PC-9 (cell line): ENCODE measurements at regions of chr12 and their contacts with region 1.

Region 1: DNA sequence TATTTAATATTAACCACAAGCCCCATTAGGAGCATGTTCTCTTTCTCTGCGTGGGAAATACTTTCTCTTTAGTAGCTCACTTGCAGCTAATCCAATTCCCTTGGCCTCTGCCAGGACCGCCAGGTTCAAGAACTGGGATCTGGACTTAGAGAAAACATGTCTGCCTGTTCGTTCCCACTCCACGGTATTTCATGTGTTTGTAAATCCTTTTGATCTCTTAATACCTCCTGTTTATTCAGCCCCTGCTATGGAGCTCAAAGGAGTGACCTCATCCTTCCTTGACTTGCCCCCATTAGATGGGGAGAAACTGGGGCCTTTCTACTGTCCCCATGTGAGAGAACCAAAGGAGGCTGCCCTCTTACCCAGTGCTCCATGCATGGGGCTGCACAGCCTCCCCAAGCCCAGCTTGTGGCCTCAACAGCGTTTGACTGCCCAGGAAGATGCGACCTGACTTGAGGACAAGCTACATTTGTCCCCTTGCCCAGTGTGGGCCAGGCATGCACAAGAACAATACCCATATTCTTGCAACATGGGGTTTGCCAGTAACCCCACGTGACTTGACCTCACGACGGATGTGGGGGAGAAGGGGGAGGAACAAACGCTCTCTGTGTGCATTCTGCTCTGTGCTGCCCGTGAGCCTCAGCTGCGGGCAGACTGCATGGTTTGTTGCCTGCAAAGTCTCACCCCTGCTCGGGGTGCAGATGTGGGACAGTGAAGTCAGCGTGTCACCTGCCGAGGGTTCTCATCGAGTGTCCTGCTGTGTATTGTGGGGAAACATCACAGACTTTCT is 30.3 kb downstream of the CD9 start:
- DNase-seq: no peak
- H3K4me3 ChIP-seq: no peak overlapping the region
- H3K27ac ChIP-seq: peak overlapping the region; percentile 86
- H3K4me1 ChIP-seq: peaks cover 81% of the 10 kb centered on the region
- H3K27me3 ChIP-seq: no peaks in the 10 kb centered on the region
- CTCF ChIP-seq: no peak

Region 2: GRCh38 chr12:6116175-6117021 is 114.1 kb before region 1 on chr12:
- CTCF ChIA-PET with region 1: interaction called, 10 read pairs
- POLR2A ChIA-PET with region 1: no interaction called
- intact Hi-C with region 1: no loop called
- DNase-seq: peak in 1 of 2 experiments; percentile 36
- H3K4me3 ChIP-seq: no peak overlapping the region
- H3K27ac ChIP-seq: no peak overlapping the region
- H3K4me1 ChIP-seq: peaks cover 9% of the 10 kb centered on the region; the same call in 1 of the 2 replicates
- H3K27me3 ChIP-seq: no peaks in the 10 kb centered on the region
- CTCF ChIP-seq: no peak

Region 3: DNA sequence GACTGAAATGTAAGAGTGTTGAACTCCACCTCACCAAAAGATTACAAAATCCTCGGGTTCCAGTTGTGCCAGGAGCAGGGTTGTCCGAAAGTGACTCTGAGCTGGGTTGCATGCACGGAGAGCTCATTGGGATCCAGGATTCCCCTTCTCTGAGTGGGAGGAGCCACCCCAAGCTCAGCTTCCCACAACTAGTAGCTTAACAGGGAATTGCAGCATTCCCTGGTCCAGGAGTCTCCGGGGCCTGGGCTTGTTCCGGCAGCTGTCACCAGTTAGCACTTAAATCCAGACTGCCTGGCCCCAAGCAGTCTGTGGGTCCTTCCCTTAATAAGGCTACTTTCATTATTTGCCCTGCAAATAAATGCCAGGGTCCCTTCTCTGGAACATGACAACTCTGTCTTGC is 19.8 kb after region 1 on chr12:
- CTCF ChIA-PET with region 1: no interaction called
- POLR2A ChIA-PET with region 1: no interaction called
- intact Hi-C with region 1: loop called (anchors 2 kb)
- DNase-seq: no peak
- H3K4me3 ChIP-seq: no peak overlapping the region
- H3K27ac ChIP-seq: no peak overlapping the region
- H3K4me1 ChIP-seq: peaks cover 20% of the 10 kb centered on the region
- H3K27me3 ChIP-seq: no peaks in the 10 kb centered on the region
- CTCF ChIP-seq: no peak